Pancreas (tissue), 10 donors: ENCODE measurements at regions of chr5 and their contacts with region 1.

Region 1: DNA sequence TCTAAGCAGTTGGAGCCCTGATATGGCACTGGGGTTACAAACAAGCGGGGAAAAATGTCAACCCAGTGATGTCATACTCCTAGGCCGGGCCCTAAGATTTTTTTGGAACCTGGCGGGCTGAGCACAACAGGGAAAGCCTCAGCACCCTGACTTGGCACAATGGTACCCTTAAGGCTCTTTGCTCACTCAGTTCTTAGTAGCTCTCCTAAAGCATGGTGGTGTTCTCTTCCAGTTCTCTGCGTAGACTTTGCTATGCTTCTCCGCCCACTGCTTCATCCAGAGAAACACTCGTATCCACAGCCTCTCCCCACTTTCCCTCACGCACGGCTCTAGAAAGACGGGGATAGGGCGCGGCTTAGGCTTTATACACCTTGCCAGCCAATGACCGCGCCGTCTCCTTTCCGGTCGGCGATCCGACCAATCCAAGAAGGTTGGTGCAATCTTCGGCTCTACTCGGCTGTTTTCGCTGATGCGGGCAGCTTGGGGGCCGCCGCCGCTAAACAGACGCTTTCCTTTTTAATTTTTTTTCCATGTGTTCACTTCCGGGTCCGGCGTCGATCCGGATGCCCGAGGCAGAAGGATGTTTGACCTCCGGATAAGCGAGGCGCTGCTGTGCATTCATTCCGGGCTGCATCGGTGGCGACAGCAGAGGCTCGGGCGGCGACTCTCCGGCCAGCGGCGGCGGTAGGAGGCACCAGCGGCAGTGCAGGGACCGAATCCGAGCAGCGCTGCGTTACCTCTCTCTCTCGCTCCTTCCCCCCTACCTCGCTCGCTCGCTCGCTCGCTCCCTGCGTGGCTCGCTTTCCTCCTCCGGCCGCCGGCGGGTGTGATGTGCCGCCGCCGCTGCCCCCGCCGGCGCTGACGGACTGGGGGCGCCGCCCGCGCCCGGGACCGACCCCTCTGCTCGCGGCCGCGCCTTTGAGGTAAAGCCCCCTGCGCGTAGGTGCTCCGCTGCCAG is at the start of gene CSNK1G3:
- DNase-seq: peak; percentile 89 to 97 (median 96)
- ATAC-seq: peak; percentile 96 to 99 (median 97)
- H3K4me3 ChIP-seq: peak within 1 kb of the TSS; percentile 63 to 87 (median 74)
- H3K27ac ChIP-seq: peak within 1 kb of the TSS; percentile 77 to 95 (median 89)
- H3K4me1 ChIP-seq: peaks cover 0 to 9% (median 0%) of the 10 kb centered on the region in 3 donors
- H3K27me3 ChIP-seq: no peaks in the 10 kb centered on the region
- CTCF ChIP-seq: no peak
- total RNA-seq, gene CSNK1G3: 11.3 to 29.0 (median 16.7) TPM

Region 2: GRCh38 chr5:123423278-123424149 is 88.4 kb before region 1 on chr5 and contains the start of gene CEP120:
- intact Hi-C with region 1: loop called in 1 of 3 experiments (anchors 10 kb)
- DNase-seq: peak; percentile 97 to 99 (median 99)
- ATAC-seq: peak; percentile 97 to 99 (median 98)
- H3K4me3 ChIP-seq: peak within 1 kb of the TSS; percentile 54 to 99 (median 84)
- H3K27ac ChIP-seq: peak within 1 kb of the TSS; percentile 73 to 89 (median 88)
- H3K4me1 ChIP-seq: peaks cover 0 to 26% (median 9%) of the 10 kb centered on the region in 3 donors
- H3K27me3 ChIP-seq: no peaks in the 10 kb centered on the region
- CTCF ChIP-seq: peak; percentile 55 to 69 (median 58)
- total RNA-seq, gene CEP120: 8.9 to 12.7 (median 10.3) TPM

Region 3: GRCh38 chr5:123538670-123539459 is 26.9 kb after region 1 on chr5:
- intact Hi-C with region 1: no loop called
- DNase-seq: no peak
- ATAC-seq: peak in 2 of 4 donors; percentile 25 to 36
- H3K4me3 ChIP-seq: no peak overlapping the region
- H3K27ac ChIP-seq: no peak overlapping the region
- H3K4me1 ChIP-seq: peaks cover 0 to 6% (median 0%) of the 10 kb centered on the region in 3 donors
- H3K27me3 ChIP-seq: no peaks in the 10 kb centered on the region
- CTCF ChIP-seq: no peak